Calu3 (cell line): ENCODE measurements at regions of chr11 and their contacts with region 1.

Region 1: GRCh38 chr11:94897330-94897768 is 76.0 kb downstream of the CWC15 start:
- DNase-seq: peak; percentile 26
- H3K4me3 Mint-ChIP-seq: no peak overlapping the region
- H3K27ac Mint-ChIP-seq: no peak overlapping the region
- H3K4me1 Mint-ChIP-seq: no peaks in the 10 kb centered on the region
- H3K27me3 Mint-ChIP-seq: no peaks in the 10 kb centered on the region
- CTCF ChIP-seq: peak; percentile 58

Region 2: DNA sequence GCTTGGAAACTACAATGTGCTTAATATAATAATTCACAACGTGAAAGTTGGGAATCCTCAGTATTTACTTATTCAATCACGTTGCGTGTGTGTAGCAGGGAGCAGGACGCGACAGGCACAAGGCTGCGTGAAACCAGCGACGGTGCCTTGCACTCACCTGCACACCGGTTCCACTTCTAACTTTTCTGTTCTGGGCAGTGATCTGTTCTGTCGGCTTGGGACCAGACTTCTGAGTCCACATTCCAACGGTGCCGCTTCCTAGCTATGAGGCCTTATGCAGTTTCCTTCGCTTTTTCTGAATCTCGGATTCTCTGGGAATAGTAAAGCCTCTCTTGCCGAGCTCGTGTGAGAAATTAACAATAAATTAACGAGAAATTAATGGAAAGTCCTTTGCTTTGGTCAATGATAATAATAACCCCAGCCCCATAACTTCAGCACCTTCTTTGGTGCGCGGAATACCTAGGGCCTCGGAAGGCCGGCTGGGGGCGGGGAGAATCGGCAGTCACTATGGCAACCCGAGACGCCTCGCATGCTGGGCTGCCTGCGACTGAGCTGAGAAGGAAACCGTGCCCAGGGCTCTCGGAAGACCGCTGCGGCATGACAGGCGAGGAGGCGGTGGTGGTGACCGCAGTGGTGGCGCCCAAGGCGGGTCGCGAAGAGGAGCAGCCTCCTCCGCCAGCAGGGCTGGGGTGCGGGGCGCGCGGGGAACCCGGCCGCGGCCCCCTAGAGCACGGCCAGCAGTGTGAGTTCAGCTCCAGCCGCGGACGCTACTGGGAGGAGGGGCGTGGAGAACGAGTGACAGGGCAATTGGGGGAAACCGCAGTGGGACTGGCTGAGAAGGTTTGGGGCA is 385.2 kb before region 1 on chr11 and contains the start of gene C11orf97:
- CTCF ChIA-PET with region 1: no interaction called
- intact Hi-C with region 1: loop called (anchors 10 kb)
- DNase-seq: peak; percentile 72
- H3K4me3 Mint-ChIP-seq: peak within 1 kb of the TSS; percentile 87
- H3K27ac Mint-ChIP-seq: no peak within 1 kb of the TSS
- H3K4me1 Mint-ChIP-seq: no peaks in the 10 kb centered on the region
- H3K27me3 Mint-ChIP-seq: no peaks in the 10 kb centered on the region
- CTCF ChIP-seq: no peak
- total RNA-seq, gene C11orf97: not detected in 2 replicates

Region 3: GRCh38 chr11:94762208-94762607 is 135.1 kb before region 1 on chr11:
- CTCF ChIA-PET with region 1: no interaction called
- intact Hi-C with region 1: loop called (anchors 2 kb)
- DNase-seq: peak; percentile 49
- H3K4me3 Mint-ChIP-seq: no peak overlapping the region
- H3K27ac Mint-ChIP-seq: no peak overlapping the region
- H3K4me1 Mint-ChIP-seq: no peaks in the 10 kb centered on the region
- H3K27me3 Mint-ChIP-seq: no peaks in the 10 kb centered on the region
- CTCF ChIP-seq: peak; percentile 26

Region 4: GRCh38 chr11:94786264-94787126 is 110.9 kb before region 1 on chr11:
- CTCF ChIA-PET with region 1: no interaction called
- intact Hi-C with region 1: loop called (anchors 5 kb)
- DNase-seq: peak; percentile 23
- H3K4me3 Mint-ChIP-seq: no peak overlapping the region
- H3K27ac Mint-ChIP-seq: no peak overlapping the region
- H3K4me1 Mint-ChIP-seq: peaks cover 48% of the 10 kb centered on the region
- H3K27me3 Mint-ChIP-seq: no peaks in the 10 kb centered on the region
- CTCF ChIP-seq: peak; percentile 50